Heart right ventricle (tissue), 16 donors: ENCODE measurements at regions of chr2 and their contacts with region 1.

Region 1: DNA sequence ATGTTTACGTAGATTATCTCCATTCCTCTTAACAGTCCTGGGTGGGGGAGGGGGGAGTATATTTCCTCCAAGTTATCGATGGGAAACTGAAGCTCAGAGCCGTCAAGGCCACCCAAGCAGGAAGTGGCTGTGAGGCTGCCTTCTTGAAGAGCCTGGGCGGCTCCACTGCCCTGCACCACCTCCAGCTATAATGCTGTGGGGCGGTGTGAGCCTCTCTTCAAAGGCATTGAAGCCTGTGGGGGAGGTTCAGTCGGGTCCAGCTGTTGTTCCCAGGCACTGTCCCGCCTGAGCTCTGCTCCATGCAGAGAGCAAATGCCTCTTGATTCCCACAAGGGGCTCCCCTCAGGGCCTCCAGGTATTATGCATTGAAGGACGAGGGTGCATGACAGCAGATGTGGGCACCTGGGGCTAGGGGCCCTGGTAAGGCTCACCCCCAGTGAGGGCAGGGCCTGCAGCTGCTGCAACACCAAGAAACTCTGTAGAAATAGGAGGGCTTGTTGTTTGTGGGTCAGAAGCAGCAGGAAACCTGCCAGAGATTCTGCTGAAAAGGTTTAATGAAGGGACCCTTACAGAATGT is 29.5 kb upstream of the LAPTM4A start:
- DNase-seq: no peak
- ATAC-seq: peak in 1 of 8 donors; percentile 26
- H3K4me3 ChIP-seq: no peak overlapping the region
- H3K27ac ChIP-seq: no peak overlapping the region
- H3K4me1 ChIP-seq: no peaks in the 10 kb centered on the region
- H3K27me3 ChIP-seq: no peaks in the 10 kb centered on the region
- CTCF ChIP-seq: no peak

Region 2: GRCh38 chr2:20040489-20041172 is 40.3 kb before region 1 on chr2:
- intact Hi-C with region 1: loop called in 1 of 10 experiments (anchors 5 kb)
- DNase-seq: no peak
- ATAC-seq: no peak
- H3K4me3 ChIP-seq: no peak overlapping the region
- H3K27ac ChIP-seq: no peak overlapping the region
- H3K4me1 ChIP-seq: peaks cover 3 to 76% (median 53%) of the 10 kb centered on the region in 9 donors
- H3K27me3 ChIP-seq: no peaks in the 10 kb centered on the region
- CTCF ChIP-seq: no peak

Region 3: GRCh38 chr2:20106746-20107145 is 25.8 kb after region 1 on chr2:
- intact Hi-C with region 1: no loop called
- DNase-seq: peak; percentile 59 to 63
- ATAC-seq: peak; percentile 44 to 87 (median 69)
- H3K4me3 ChIP-seq: peak overlapping the region in 8 of 10 donors; percentile 8 to 43 (median 27)
- H3K27ac ChIP-seq: peak overlapping the region in 1 of 10 donors; percentile 22
- H3K4me1 ChIP-seq: peaks cover 0 to 27% (median 4%) of the 10 kb centered on the region in 9 donors
- H3K27me3 ChIP-seq: peaks cover 0 to 18% (median 8%) of the 10 kb centered on the region in 7 donors
- CTCF ChIP-seq: peak; percentile 23 to 70 (median 57)